CD8-positive, alpha-beta T cell (primary cell): ENCODE measurements at regions of chr19 and their contacts with region 1.

Region 1: DNA sequence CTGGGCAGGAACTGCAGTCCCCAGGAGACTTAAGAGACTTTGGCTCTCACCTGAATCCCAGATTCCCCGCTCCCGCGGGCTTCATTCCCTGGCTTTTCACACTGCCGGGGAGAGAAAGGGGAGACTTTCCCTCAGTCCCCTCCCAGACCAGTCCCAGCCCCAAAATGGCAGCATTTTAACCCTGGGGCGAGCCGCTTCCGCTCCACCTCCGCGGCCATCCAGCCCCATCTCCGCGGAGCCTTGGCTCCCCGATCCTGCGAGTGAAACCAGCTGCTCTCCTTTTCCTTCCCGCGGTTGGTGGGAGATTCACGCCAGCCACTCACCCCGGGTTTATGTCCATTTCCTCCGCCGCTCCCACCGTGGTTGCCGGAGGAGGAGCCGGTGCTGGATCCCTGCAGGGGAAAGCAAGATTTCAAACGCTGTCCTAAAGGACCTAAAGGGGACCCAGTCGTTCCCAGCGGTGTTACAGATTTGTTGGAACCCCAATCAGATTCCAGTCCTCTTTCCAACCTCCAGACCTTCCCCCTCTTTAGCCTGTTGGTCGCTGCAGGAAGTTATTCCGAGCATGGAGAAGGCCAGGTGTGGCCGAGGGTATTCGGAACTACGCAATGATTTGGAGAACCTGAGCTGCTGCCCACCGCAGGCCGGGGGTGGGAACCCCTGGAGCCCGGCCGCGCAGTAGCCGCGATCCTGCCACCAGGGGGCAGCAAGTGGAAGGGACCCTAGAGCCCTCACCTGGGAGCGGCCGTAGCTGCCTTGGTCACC is 3.4 kb downstream of the DMKN start:
- DNase-seq: peak; percentile 56 to 84 (median 77)
- ATAC-seq: peak; percentile 75
- H3K4me3 ChIP-seq: peak overlapping the region; percentile 49 to 59
- H3K4me3 Mint-ChIP-seq: peak overlapping the region; percentile 70
- H3K27ac ChIP-seq: peak overlapping the region in 1 of 2 experiments; percentile 53
- H3K27ac Mint-ChIP-seq: no peak overlapping the region
- H3K4me1 ChIP-seq: peaks cover 18% of the 10 kb centered on the region
- H3K4me1 Mint-ChIP-seq: peaks cover 17% of the 10 kb centered on the region
- H3K27me3 ChIP-seq: peaks cover 0 to 7% of the 10 kb centered on the region in 2 experiments
- H3K27me3 Mint-ChIP-seq: peaks cover 44% of the 10 kb centered on the region
- CTCF ChIP-seq: peak; percentile 80

Region 2: DNA sequence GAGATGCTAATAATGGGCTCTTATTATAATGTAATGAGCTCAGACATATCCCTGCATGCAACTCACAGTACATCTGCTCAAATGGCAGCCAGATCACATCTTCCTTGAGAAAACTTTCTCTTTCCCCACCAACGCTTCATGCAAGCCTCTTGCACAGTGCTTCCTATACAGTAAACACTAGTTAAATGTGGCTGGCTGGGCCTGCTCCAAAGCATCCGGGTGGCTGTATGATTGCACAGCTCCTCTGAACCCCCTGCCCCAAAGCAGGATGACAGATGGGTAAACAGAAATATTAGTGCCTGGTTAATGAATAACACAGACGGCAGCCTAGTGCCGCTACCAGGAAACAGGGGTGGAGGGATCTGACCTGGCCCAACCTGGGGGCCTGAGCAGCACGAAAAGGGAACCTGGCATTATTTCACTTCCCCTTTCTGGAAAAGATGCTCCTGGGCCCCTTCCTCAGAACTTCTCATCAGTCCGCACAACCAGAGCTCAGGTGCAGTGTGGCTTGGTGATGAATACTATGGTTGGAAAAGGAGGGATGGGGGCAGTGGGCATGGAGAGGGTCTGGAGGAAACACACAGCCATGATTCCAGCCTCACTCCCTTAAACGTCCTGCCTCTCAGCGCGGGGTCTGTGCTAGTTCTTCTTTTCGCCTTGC is 51.2 kb before region 1 on chr19:
- CTCF ChIA-PET with region 1: no interaction called
- POLR2A ChIA-PET with region 1: no interaction called
- intact Hi-C with region 1: no loop called
- DNase-seq: peak in 1 of 9 experiments; percentile 24
- ATAC-seq: no peak
- H3K4me3 ChIP-seq: no peak overlapping the region
- H3K4me3 Mint-ChIP-seq: no peak overlapping the region
- H3K27ac ChIP-seq: no peak overlapping the region
- H3K27ac Mint-ChIP-seq: no peak overlapping the region
- H3K4me1 ChIP-seq: peaks cover 28% of the 10 kb centered on the region
- H3K4me1 Mint-ChIP-seq: peaks cover 33% of the 10 kb centered on the region
- H3K27me3 ChIP-seq: no peaks in the 10 kb centered on the region
- H3K27me3 Mint-ChIP-seq: no peaks in the 10 kb centered on the region
- CTCF ChIP-seq: no peak

Region 3: GRCh38 chr19:35487643-35488182 is 22.3 kb before region 1 on chr19:
- CTCF ChIA-PET with region 1: interaction called, 13 read pairs
- POLR2A ChIA-PET with region 1: no interaction called
- intact Hi-C with region 1: no loop called
- DNase-seq: no peak
- ATAC-seq: no peak
- H3K4me3 ChIP-seq: no peak overlapping the region
- H3K4me3 Mint-ChIP-seq: no peak overlapping the region
- H3K27ac ChIP-seq: no peak overlapping the region
- H3K27ac Mint-ChIP-seq: no peak overlapping the region
- H3K4me1 ChIP-seq: no peaks in the 10 kb centered on the region
- H3K4me1 Mint-ChIP-seq: no peaks in the 10 kb centered on the region
- H3K27me3 ChIP-seq: no peaks in the 10 kb centered on the region
- H3K27me3 Mint-ChIP-seq: peaks cover 16% of the 10 kb centered on the region
- CTCF ChIP-seq: no peak

Region 4: DNA sequence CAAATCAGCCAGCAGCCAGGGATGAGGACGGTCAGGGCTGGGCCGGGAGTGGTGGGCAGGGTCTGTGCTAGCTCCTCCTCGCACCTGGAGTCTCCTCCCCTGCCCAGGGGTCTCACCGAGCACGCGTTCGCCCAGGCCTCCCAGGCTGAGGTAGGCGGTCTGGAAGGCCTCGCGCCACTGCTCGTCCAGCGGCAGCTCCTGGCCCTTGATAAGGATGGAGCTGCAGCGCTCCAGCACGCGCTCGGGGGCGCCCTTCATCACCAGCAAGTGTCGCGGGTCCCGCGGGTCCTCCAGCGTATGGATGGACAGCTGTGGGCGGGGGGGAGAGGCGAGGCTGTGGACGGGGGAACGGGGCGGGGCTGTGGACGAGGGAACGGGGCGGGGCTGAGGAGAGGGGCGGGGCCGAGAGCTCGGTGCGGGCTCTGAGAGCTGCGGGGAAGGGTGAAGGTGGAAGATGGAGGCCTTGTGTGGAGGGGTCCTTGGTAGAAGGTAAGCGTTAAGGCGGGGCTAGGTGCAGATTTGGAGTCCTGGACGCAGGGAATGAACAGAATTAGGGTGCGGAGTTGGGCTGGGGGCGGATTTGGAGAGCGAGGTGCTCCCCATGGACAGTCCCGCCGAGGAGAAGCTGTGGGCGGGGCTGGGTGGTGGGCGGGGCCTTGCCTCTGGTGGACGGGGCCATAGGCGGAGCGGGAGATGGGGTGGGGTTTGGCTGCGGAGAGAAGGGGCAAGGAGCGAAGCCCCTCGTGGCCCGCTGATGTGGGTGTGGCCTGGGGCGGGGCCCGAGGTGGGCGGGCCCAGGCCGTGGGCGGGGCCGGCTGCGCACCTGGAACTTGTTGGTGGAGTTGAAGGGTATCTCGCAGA is 47.7 kb after region 1 on chr19:
- CTCF ChIA-PET with region 1: no interaction called
- POLR2A ChIA-PET with region 1: no interaction called
- intact Hi-C with region 1: no loop called
- DNase-seq: peak in 7 of 9 experiments; percentile 21 to 64 (median 55)
- ATAC-seq: peak; percentile 70
- H3K4me3 ChIP-seq: peak overlapping the region; percentile 12 to 39
- H3K4me3 Mint-ChIP-seq: peak overlapping the region; percentile 68
- H3K27ac ChIP-seq: no peak overlapping the region
- H3K27ac Mint-ChIP-seq: no peak overlapping the region
- H3K4me1 ChIP-seq: peaks cover 11% of the 10 kb centered on the region
- H3K4me1 Mint-ChIP-seq: peaks cover 9% of the 10 kb centered on the region
- H3K27me3 ChIP-seq: peaks cover 10 to 12% of the 10 kb centered on the region in 2 experiments
- H3K27me3 Mint-ChIP-seq: peaks cover 42% of the 10 kb centered on the region
- CTCF ChIP-seq: no peak

Region 5: DNA sequence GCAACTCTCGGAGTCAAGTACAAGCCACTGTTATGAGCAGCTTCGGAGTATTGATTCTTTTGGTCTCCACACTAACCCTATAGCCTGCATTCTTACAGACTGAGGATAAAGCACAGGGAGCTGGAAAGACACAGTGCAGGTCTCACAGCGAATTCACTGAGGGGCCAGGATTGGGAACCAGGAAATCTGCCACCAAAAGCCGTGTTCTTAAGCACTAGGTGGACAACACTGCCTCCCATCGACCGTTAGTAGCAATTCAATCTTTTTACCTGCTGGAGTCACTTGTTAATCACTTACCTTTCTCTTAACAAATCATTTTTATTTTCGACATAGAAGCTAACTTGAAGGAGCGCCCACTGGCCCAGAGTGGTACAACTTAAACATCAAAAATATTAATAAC is 82.2 kb after region 1 on chr19:
- CTCF ChIA-PET with region 1: interaction called, 20 read pairs
- POLR2A ChIA-PET with region 1: no interaction called
- intact Hi-C with region 1: loop called in 1 of 2 experiments (anchors 1 kb)
- DNase-seq: peak in 2 of 9 experiments; percentile 64 to 71
- ATAC-seq: no peak
- H3K4me3 ChIP-seq: no peak overlapping the region
- H3K4me3 Mint-ChIP-seq: no peak overlapping the region
- H3K27ac ChIP-seq: no peak overlapping the region
- H3K27ac Mint-ChIP-seq: no peak overlapping the region
- H3K4me1 ChIP-seq: no peaks in the 10 kb centered on the region
- H3K4me1 Mint-ChIP-seq: no peaks in the 10 kb centered on the region
- H3K27me3 ChIP-seq: peaks cover 0 to 2% of the 10 kb centered on the region in 2 experiments
- H3K27me3 Mint-ChIP-seq: peaks cover 11% of the 10 kb centered on the region
- CTCF ChIP-seq: peak; percentile 48